Activated CD4-positive, alpha-beta T cell treated with anti-CD3 and anti-CD28 coated beads for 36 hours (primary cell): ENCODE measurements at regions of chr11 and their contacts with region 1.

Region 1: GRCh38 chr11:74398244-74399159 is at the start of gene PGM2L1:
- DNase-seq: peak; percentile 96
- ATAC-seq: peak; percentile 88
- H3K4me3 Mint-ChIP-seq: peak within 1 kb of the TSS; percentile 92
- H3K27ac Mint-ChIP-seq: peak within 1 kb of the TSS; percentile 100
- H3K4me1 Mint-ChIP-seq: peaks cover 39% of the 10 kb centered on the region
- H3K27me3 Mint-ChIP-seq: no peaks in the 10 kb centered on the region
- total RNA-seq, gene PGM2L1: 8.8 to 11.0 TPM

Region 2: DNA sequence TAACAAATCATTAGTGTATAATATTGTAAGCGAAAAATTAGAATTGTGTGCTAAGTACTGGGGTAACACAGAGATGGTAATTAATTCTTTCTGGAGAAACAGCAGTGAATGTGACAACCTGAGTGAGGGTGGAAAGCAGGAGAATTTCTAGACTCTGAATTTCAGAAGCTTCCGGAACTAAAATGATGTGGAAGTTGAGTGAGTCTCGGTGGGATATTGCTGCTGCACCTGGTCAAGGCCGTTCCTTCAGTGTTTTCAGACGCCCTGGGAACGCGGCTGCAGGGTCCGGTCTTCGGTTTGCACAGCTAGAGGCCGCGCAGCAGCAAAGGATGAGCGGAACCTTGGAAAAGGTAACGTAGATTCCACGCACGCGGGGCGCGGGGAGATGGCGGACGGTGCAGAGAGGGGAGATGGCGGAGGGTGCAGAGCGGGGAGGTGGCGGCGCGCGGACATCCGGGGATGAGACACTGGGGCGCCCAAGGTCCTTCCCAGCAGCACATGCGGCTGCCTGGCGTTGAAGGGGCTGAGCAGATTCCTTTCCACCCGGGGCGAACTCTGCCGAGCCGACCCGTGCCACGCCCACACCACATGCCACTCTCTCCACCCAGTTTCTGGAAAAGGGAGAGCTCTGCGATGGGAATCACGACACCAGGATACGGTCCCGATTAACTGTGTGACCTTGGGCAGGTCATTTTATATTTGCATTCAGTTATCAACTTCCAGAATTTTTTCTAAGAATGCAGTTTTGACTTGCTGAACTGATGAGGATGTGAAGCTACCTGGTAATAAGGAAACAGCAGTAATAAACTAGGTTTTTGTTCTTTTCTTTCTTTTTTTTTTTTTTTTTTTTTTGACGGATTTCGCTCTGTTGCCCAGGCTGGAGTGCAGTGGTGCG is 610.6 kb before region 1 on chr11 and contains the start of gene MRPL48:
- CTCF ChIA-PET with region 1: no interaction called
- POLR2A ChIA-PET with region 1: no interaction called
- intact Hi-C with region 1: loop called in 1 of 2 experiments (anchors 5 kb)
- DNase-seq: peak; percentile 95
- ATAC-seq: peak; percentile 99
- H3K4me3 Mint-ChIP-seq: peak within 1 kb of the TSS; percentile 92
- H3K27ac Mint-ChIP-seq: peak within 1 kb of the TSS; percentile 99
- H3K4me1 Mint-ChIP-seq: peaks cover 9% of the 10 kb centered on the region
- H3K27me3 Mint-ChIP-seq: no peaks in the 10 kb centered on the region
- total RNA-seq, gene MRPL48: 48.5 to 52.0 TPM

Region 3: GRCh38 chr11:74170694-74171629 is 227.5 kb before region 1 on chr11 and contains the starts of genes C2CD3 and PPME1:
- CTCF ChIA-PET with region 1: no interaction called
- POLR2A ChIA-PET with region 1: interaction called, 3 read pairs
- intact Hi-C with region 1: loop called (anchors 1 to 5 kb)
- DNase-seq: peak; percentile 98
- ATAC-seq: peak; percentile 96
- H3K4me3 Mint-ChIP-seq: no peak within 1 kb of the TSS
- H3K27ac Mint-ChIP-seq: no peak within 1 kb of the TSS
- H3K4me1 Mint-ChIP-seq: peaks cover 16% of the 10 kb centered on the region
- H3K27me3 Mint-ChIP-seq: no peaks in the 10 kb centered on the region
- total RNA-seq, gene C2CD3: 23.9 to 28.0 TPM
- total RNA-seq, gene PPME1: 54.2 to 61.5 TPM

Region 4: GRCh38 chr11:74418509-74418895 is 20.0 kb after region 1 on chr11:
- CTCF ChIA-PET with region 1: interaction called, 3 read pairs
- POLR2A ChIA-PET with region 1: no interaction called
- intact Hi-C with region 1: loop called (anchors 1 to 2 kb)
- DNase-seq: no peak
- ATAC-seq: peak; percentile 65
- H3K4me3 Mint-ChIP-seq: no peak overlapping the region
- H3K27ac Mint-ChIP-seq: peak overlapping the region; percentile 61
- H3K4me1 Mint-ChIP-seq: peaks cover 32% of the 10 kb centered on the region
- H3K27me3 Mint-ChIP-seq: no peaks in the 10 kb centered on the region

Region 5: GRCh38 chr11:74592441-74593362 is 194.2 kb after region 1 on chr11 and contains the start of gene POLD3:
- CTCF ChIA-PET with region 1: no interaction called
- POLR2A ChIA-PET with region 1: no interaction called
- intact Hi-C with region 1: loop called (anchors 1 to 5 kb)
- DNase-seq: peak; percentile 98
- ATAC-seq: peak; percentile 96
- H3K4me3 Mint-ChIP-seq: peak within 1 kb of the TSS; percentile 93
- H3K27ac Mint-ChIP-seq: peak within 1 kb of the TSS; percentile 96
- H3K4me1 Mint-ChIP-seq: peaks cover 27% of the 10 kb centered on the region
- H3K27me3 Mint-ChIP-seq: no peaks in the 10 kb centered on the region
- total RNA-seq, gene POLD3: 70.0 to 79.8 TPM

Region 6: DNA sequence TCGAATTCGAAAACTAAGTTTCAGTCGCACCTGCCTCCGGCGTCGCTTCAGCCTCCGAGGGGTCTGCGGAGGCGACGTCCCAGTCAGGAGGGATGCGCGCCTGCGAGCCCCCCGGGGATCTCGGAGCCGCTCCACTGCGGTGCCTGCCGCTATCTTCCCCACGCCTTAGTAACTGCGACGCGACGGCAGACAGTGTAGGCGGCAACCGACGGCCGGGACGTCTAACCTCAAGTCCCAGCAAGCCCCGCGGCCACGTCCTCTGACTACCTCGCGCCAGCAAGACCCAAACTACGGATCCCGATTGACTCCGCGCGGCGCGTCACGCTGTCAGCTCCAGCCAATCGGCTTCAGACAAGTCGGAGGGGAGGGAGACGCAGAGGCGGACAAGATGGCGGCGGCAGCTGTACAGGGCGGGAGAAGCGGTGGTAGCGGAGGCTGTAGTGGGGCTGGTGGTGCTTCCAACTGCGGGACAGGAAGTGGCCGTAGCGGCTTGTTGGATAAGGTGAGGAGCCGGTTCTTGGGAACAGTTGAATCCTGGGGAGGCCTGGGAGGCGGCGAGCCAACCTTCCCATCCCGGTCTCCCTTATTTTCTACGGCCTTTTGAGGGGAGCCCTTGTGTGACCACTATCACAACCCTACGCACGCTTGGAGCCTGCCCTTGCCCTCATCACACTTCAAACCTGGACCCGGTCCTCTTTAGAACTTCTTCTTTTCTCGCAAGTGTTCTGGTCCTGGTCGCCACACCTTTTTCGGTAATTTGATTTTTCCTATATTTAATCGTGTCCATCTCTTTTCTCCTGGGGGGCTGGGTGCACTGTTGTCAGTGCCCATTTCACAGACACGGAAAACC is 550.6 kb after region 1 on chr11 and contains the starts of genes SPCS2 and XRRA1:
- CTCF ChIA-PET with region 1: no interaction called
- POLR2A ChIA-PET with region 1: no interaction called
- intact Hi-C with region 1: loop called in 1 of 2 experiments (anchors 2 kb)
- DNase-seq: peak; percentile 100
- ATAC-seq: peak; percentile 99
- H3K4me3 Mint-ChIP-seq: peak within 1 kb of the TSS; percentile 96
- H3K27ac Mint-ChIP-seq: peak within 1 kb of the TSS; percentile 97
- H3K4me1 Mint-ChIP-seq: peaks cover 42% of the 10 kb centered on the region
- H3K27me3 Mint-ChIP-seq: no peaks in the 10 kb centered on the region
- total RNA-seq, gene SPCS2: 124 to 131 TPM
- total RNA-seq, gene XRRA1: 7.8 to 11.9 TPM

Region 7: GRCh38 chr11:76380967-76381719 is 1982.6 kb after region 1 on chr11 and contains the starts of genes GVQW3 and THAP12:
- CTCF ChIA-PET with region 1: no interaction called
- POLR2A ChIA-PET with region 1: no interaction called
- intact Hi-C with region 1: loop called in 1 of 2 experiments (anchors 5 kb)
- DNase-seq: peak; percentile 98
- ATAC-seq: peak; percentile 90
- H3K4me3 Mint-ChIP-seq: peak within 1 kb of the TSS; percentile 82
- H3K27ac Mint-ChIP-seq: peak within 1 kb of the TSS; percentile 95
- H3K4me1 Mint-ChIP-seq: peaks cover 56% of the 10 kb centered on the region
- H3K27me3 Mint-ChIP-seq: no peaks in the 10 kb centered on the region
- total RNA-seq, gene GVQW3: 3.2 to 3.7 TPM
- total RNA-seq, gene THAP12: 53.6 to 60.9 TPM